Activated CD4-positive, alpha-beta memory T cell treated with anti-CD3 and anti-CD28 coated beads for 36 hours (primary cell): ENCODE measurements at regions of chr11 and their contacts with region 1.

Region 1: DNA sequence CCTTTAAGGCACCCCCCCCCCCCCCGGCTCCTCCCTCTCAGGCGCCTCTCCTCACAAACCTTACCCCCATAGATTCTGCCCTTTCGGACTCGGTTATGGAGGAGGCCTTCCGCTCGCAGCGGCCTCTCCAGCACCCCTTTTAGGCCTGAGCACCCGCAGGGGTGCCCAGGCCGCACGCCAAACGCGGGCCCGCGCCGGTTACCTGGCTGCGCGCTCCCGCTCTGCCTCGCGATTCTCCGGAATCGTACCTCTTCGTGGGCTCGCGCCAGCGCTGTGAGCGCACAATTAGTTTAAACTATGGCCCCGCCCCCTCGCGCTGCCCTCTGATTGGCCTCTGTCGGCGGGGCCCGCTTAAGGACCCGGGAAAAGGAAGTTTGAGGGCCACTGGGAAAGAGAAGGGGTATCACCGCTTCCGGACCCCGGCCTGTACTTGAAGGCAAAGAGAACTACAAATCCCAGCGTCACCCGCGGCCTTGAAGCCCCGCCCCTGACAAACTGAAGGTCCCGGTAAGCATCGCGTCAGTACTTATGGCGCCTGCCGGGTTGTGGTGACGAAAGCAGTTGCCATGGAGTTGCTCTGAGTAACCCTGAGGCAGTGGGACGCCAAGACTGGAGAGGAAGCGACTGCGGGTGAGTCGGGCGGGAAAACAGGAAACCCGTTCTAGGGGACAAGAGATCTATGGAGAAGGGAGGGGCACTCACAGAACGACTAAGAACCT is at the starts of genes LRRC51 and NUMA1:
- DNase-seq: peak; percentile 100
- H3K4me3 Mint-ChIP-seq: peak within 1 kb of the TSS; percentile 92
- H3K27ac Mint-ChIP-seq: peak within 1 kb of the TSS; percentile 96
- H3K4me1 Mint-ChIP-seq: peaks cover 31% of the 10 kb centered on the region
- H3K27me3 Mint-ChIP-seq: no peaks in the 10 kb centered on the region
- total RNA-seq, gene LRRC51: 8.3 to 8.5 TPM
- total RNA-seq, gene NUMA1: 149 to 158 TPM

Region 2: DNA sequence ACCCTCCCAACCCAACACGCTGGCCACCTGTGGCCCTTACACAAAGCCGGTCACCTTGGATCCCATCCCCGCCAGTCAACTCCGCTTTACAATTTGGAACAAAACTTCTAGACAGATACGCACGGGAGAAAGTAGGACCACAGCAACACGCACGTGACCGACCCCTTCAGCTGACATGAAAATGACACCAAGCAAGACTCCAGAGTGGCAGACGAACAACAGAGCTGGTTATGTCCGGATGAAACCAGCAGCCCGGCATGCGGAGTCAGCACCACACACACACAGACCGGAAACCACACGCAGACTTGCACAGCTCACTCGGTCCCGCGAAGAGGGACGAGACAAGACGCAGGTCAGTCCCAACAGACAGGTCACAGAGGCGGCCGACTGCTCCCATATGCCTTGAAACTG is 1194.6 kb before region 1 on chr11:
- CTCF ChIA-PET with region 1: no interaction called
- POLR2A ChIA-PET with region 1: no interaction called
- intact Hi-C with region 1: no loop called
- DNase-seq: no peak
- H3K4me3 Mint-ChIP-seq: no peak overlapping the region
- H3K27ac Mint-ChIP-seq: no peak overlapping the region
- H3K4me1 Mint-ChIP-seq: no peaks in the 10 kb centered on the region
- H3K27me3 Mint-ChIP-seq: peaks cover 4% of the 10 kb centered on the region

Region 3: DNA sequence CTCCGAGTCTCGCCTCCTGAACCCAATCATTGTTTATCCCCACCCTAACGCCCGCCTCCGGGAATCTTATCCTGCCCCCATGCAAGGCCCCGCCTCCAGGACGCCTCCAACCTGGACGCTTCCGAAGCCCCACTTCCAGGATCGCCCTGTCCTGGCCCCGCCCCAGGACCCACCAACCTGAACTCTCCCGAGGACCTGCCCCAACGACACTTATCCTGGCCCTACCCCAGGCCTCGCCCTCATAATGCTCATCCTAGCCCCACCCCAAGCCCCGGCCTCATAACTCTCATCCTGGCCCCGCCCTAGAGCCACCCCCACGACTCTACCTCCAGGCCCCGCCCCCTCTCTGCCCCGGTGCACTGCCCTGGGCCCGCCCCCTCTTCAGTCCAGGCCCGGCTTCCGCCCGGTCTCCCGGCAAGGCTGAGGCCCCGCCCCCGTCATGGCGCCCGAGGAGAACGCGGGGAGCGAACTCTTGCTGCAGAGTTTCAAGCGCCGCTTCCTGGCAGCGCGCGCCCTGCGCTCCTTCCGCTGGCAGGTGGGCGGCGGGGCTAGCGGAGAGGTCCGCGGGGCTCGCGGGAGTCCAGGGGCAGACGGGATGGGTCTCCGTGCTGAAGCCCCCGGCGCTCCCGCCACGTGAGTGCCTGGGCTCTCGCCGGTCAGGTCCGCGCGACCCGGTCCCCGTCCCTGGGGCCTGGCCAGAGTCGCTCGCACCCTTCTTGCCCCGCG is 293.2 kb before region 1 on chr11:
- CTCF ChIA-PET with region 1: no interaction called
- POLR2A ChIA-PET with region 1: no interaction called
- intact Hi-C with region 1: loop called (anchors 1 kb)
- DNase-seq: peak; percentile 97
- H3K4me3 Mint-ChIP-seq: peak overlapping the region; percentile 92
- H3K27ac Mint-ChIP-seq: peak overlapping the region; percentile 95
- H3K4me1 Mint-ChIP-seq: peaks cover 22% of the 10 kb centered on the region
- H3K27me3 Mint-ChIP-seq: no peaks in the 10 kb centered on the region

Region 4: DNA sequence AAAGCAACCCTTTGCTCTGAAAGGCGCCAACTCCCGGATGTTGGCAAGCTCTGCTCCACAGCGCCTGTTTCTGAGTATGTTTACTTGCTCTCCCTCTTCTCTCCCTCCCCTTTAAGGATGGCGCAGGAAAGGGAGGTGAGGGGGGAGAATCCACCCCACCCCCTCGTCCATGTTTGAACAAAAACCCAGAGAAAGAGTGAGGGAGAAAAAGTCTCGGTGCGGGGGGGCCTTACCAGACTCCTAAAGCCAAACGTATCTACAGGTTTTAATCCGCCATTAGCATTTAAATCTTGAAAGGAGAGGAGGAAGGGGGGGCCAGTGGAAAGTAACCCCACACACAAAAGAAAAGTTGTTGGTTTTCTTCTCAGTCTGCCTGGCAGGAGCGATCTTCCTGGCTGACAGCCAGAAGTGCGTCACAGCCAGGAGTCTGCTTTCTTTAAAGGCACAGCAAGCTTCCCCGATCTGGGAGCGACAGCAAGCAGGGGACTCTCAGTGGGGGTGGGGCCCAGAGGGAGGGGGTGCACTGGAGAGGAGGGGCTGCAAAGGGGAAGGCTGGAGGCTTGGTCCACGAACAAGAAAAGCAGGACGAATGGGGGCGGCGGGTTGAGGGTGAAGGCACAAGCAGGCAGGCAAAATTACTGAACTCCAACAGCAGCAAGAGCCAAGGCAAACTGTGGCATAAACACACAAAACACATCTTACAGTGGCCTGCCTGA is 39.5 kb before region 1 on chr11:
- CTCF ChIA-PET with region 1: interaction called, 4 read pairs
- POLR2A ChIA-PET with region 1: interaction called, 5 read pairs
- intact Hi-C with region 1: loop called (anchors 1 kb)
- DNase-seq: peak; percentile 83
- H3K4me3 Mint-ChIP-seq: no peak overlapping the region
- H3K27ac Mint-ChIP-seq: no peak overlapping the region
- H3K4me1 Mint-ChIP-seq: peaks cover 34% of the 10 kb centered on the region
- H3K27me3 Mint-ChIP-seq: no peaks in the 10 kb centered on the region

Region 5: DNA sequence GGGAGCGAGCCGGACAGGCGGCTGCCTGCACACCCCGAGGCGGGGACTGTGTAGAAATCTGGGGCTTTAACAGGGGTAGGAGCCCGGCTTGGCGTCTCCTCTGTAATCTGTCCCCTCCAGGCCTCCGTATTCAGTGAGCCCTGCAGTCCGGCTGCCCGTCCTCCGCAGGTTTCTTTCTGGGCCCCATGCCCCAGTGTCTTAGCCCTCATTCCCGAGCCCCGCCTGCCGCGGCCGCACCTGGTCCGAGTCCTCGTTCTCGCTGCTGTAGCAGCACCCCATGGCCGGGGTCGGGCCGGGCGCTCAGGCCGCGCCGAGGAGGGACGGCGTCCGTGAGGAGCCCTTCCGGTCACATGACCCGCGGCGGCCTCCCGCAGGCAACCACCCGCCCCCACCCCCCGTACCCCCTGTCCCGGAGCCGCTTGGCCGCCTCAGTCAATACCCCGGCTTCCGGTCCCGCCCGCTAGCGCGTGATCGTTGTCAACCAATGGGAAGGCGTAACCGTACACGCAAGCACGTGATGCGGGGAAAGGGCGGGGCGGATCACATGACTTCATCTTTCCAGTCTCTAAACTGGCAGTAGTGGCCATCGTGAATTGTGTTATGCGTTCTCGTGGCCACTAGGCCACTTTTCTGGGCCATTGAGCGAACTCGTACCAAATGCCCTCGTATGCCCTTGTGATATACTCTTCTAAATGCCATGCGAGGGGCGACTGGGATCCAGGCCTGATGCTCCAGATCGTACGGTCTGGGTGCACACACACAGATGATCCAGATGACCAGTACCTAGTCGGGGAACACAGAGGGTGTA is 22.7 kb after region 1 on chr11 and contains the start of gene LAMTOR1:
- CTCF ChIA-PET with region 1: no interaction called
- POLR2A ChIA-PET with region 1: interaction called, 3 read pairs
- intact Hi-C with region 1: loop called (anchors 1 kb)
- DNase-seq: peak; percentile 99
- H3K4me3 Mint-ChIP-seq: peak within 1 kb of the TSS; percentile 80
- H3K27ac Mint-ChIP-seq: peak within 1 kb of the TSS; percentile 83
- H3K4me1 Mint-ChIP-seq: peaks cover 37% of the 10 kb centered on the region
- H3K27me3 Mint-ChIP-seq: no peaks in the 10 kb centered on the region
- total RNA-seq, gene LAMTOR1: 54.3 to 56.2 TPM

Region 6: DNA sequence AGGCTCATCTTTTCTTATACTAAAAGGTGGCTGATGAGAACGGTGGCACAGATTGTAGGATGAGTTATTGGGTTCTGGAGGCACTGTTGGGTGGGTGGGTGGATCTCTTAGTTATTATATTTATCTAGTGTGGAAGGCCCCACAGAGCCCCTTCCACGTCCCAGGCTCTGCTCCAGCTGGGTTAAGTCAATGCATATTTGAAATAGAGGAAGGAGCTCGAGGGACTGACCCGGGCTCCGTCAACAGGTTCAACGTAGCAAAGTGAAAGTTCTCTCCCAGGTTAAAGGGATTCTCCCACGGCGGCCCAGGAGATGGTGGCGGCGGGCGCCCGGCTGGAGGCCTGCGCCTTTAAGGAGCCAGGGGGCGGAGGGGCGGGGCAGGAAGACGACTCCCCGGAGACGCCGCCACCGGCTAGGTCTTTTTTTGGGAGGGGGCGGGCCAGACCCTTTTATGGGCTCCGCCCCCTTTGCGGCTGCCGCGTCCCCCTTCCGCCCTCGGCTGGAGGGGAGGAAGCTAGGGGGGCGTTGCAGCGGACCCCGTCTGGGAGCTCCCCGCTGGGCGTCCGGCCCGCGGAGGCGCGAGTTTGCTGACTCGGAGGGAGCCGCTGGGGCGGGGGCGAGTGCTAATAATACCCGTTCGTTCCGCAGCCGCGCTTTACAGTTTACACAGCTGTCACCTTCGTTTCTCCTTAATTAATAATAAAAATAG is 142.6 kb after region 1 on chr11:
- CTCF ChIA-PET with region 1: no interaction called
- POLR2A ChIA-PET with region 1: no interaction called
- intact Hi-C with region 1: loop called (anchors 1 kb)
- DNase-seq: peak; percentile 95
- H3K4me3 Mint-ChIP-seq: peak overlapping the region; percentile 75
- H3K27ac Mint-ChIP-seq: peak overlapping the region; percentile 77
- H3K4me1 Mint-ChIP-seq: peaks cover 24% of the 10 kb centered on the region
- H3K27me3 Mint-ChIP-seq: peaks cover 5% of the 10 kb centered on the region

Region 7: GRCh38 chr11:73114110-73114824 is 1033.9 kb after region 1 on chr11:
- CTCF ChIA-PET with region 1: no interaction called
- POLR2A ChIA-PET with region 1: no interaction called
- intact Hi-C with region 1: no loop called
- DNase-seq: no peak
- H3K4me3 Mint-ChIP-seq: no peak overlapping the region
- H3K27ac Mint-ChIP-seq: no peak overlapping the region
- H3K4me1 Mint-ChIP-seq: no peaks in the 10 kb centered on the region
- H3K27me3 Mint-ChIP-seq: no peaks in the 10 kb centered on the region